ENCODE measurements at regions of chr1 and their contacts with region 1.

Region 1: GRCh38 chr1:56578963-56579875 is at the start of gene PLPP3:
- DNase-seq: peak; percentile 93
- ATAC-seq: peak; percentile 88
- total RNA-seq, gene PLPP3: 117 TPM

Region 2: DNA sequence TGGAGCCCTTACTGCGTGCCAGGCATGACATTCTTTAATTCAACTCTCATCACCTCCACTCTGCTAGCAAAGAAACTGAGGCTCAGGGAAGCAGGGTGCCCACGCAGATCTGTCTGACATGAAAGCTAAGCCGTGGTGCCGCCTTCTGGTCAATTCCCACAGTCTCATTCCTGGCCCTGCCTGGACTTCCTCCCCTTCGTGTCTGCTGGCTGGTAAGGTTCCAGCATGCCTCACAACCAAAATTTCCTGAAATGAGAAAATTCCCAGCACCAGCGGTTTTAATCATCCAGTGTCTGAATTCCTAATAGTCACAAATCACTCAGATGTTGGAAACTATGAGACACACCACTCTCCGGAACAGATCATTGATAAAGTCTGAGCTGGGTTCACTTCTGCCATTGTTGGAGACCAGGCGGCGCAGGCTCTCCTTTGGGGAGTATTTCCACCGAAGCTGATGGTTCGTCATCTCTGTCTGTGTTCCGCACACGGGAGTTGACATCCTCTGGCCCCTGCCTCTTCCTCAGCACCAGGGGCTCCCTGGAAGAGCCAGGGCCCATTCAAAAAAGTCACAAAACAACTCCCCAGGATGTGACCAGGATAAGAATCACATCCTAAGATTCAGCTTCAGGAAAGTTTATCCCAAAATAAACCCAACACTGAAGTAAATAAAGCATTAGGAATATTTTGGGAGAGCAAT is 167.6 kb before region 1 on chr1:
- intact Hi-C with region 1: loop called (anchors 5 kb)
- DNase-seq: peak; percentile 52
- ATAC-seq: peak; percentile 42

Region 3: GRCh38 chr1:56508523-56508983 is 70.7 kb before region 1 on chr1:
- intact Hi-C with region 1: loop called (anchors 5 kb)
- DNase-seq: peak; percentile 77
- ATAC-seq: peak; percentile 86

Region 4: GRCh38 chr1:56522680-56523079 is 56.5 kb before region 1 on chr1:
- intact Hi-C with region 1: no loop called
- DNase-seq: no peak
- ATAC-seq: peak; percentile 17